CD14-positive monocyte (primary cell): ENCODE measurements at regions of chr16 and their contacts with region 1.

Region 1: GRCh38 chr16:31032736-31033708 is at the start of gene STX4:
- DNase-seq: peak; percentile 100
- H3K4me3 ChIP-seq: peak within 1 kb of the TSS; percentile 52 to 96 (median 70)
- H3K4me3 Mint-ChIP-seq: peak within 1 kb of the TSS; percentile 94 to 95
- H3K27ac ChIP-seq: peak within 1 kb of the TSS; percentile 97 to 100
- H3K27ac Mint-ChIP-seq: peak within 1 kb of the TSS; percentile 97 to 99 (median 99)
- H3K4me1 ChIP-seq: peaks cover 38 to 45% of the 10 kb centered on the region in 2 donors
- H3K4me1 Mint-ChIP-seq: peaks cover 34% of the 10 kb centered on the region
- H3K27me3 ChIP-seq: no peaks in the 10 kb centered on the region
- H3K27me3 Mint-ChIP-seq: peaks cover 0 to 3% (median 2%) of the 10 kb centered on the region in 3 donors
- CTCF ChIP-seq: no peak
- polyA plus RNA-seq, gene STX4: 18.6 to 186 (median 21.8) TPM

Region 2: GRCh38 chr16:30805370-30806169 is 227.5 kb before region 1 on chr16:
- intact Hi-C with region 1: no loop called
- DNase-seq: peak; percentile 50 to 62 (median 56)
- H3K4me3 ChIP-seq: peak overlapping the region; percentile 59 to 97 (median 82)
- H3K4me3 Mint-ChIP-seq: peak overlapping the region; percentile 91
- H3K27ac ChIP-seq: peak overlapping the region; percentile 59 to 82
- H3K27ac Mint-ChIP-seq: peak overlapping the region; percentile 72 to 89 (median 79)
- H3K4me1 ChIP-seq: peaks cover 45 to 51% of the 10 kb centered on the region in 2 donors
- H3K4me1 Mint-ChIP-seq: peaks cover 41% of the 10 kb centered on the region
- H3K27me3 ChIP-seq: no peaks in the 10 kb centered on the region
- H3K27me3 Mint-ChIP-seq: peaks cover 0 to 4% (median 0%) of the 10 kb centered on the region in 3 donors
- CTCF ChIP-seq: no peak

Region 3: GRCh38 chr16:30977502-30977901 is 55.5 kb before region 1 on chr16:
- intact Hi-C with region 1: no loop called
- DNase-seq: no peak
- H3K4me3 ChIP-seq: no peak overlapping the region
- H3K4me3 Mint-ChIP-seq: no peak overlapping the region
- H3K27ac ChIP-seq: no peak overlapping the region
- H3K27ac Mint-ChIP-seq: peak overlapping the region in 3 of 7 donors; percentile 22 to 43 (median 41)
- H3K4me1 ChIP-seq: no peaks in the 10 kb centered on the region
- H3K4me1 Mint-ChIP-seq: no peaks in the 10 kb centered on the region
- H3K27me3 ChIP-seq: no peaks in the 10 kb centered on the region
- H3K27me3 Mint-ChIP-seq: no peaks in the 10 kb centered on the region
- CTCF ChIP-seq: peak; percentile 34

Region 4: GRCh38 chr16:30997000-30997886 is 35.8 kb before region 1 on chr16:
- intact Hi-C with region 1: loop called (anchors 5 kb)
- DNase-seq: peak; percentile 79 to 82 (median 80)
- H3K4me3 ChIP-seq: peak overlapping the region; percentile 53 to 83 (median 58)
- H3K4me3 Mint-ChIP-seq: peak overlapping the region; percentile 83 to 93
- H3K27ac ChIP-seq: peak overlapping the region; percentile 67 to 87
- H3K27ac Mint-ChIP-seq: peak overlapping the region; percentile 82 to 94 (median 89)
- H3K4me1 ChIP-seq: peaks cover 24 to 32% of the 10 kb centered on the region in 2 donors
- H3K4me1 Mint-ChIP-seq: peaks cover 31% of the 10 kb centered on the region
- H3K27me3 ChIP-seq: peaks cover 0 to 3% of the 10 kb centered on the region in 2 donors
- H3K27me3 Mint-ChIP-seq: peaks cover 1 to 17% (median 4%) of the 10 kb centered on the region in 3 donors
- CTCF ChIP-seq: no peak

Region 5: GRCh38 chr16:31052124-31052523 is 19.1 kb after region 1 on chr16:
- intact Hi-C with region 1: loop called in 1 of 2 experiments (anchors 2 kb)
- DNase-seq: peak; percentile 72 to 88 (median 77)
- H3K4me3 ChIP-seq: no peak overlapping the region
- H3K4me3 Mint-ChIP-seq: no peak overlapping the region
- H3K27ac ChIP-seq: peak overlapping the region in 1 of 2 donors; percentile 17
- H3K27ac Mint-ChIP-seq: peak overlapping the region in 5 of 7 donors; percentile 62 to 85 (median 71)
- H3K4me1 ChIP-seq: peaks cover 12 to 17% of the 10 kb centered on the region in 2 donors
- H3K4me1 Mint-ChIP-seq: peaks cover 23% of the 10 kb centered on the region
- H3K27me3 ChIP-seq: no peaks in the 10 kb centered on the region
- H3K27me3 Mint-ChIP-seq: peaks cover 1 to 4% (median 2%) of the 10 kb centered on the region in 3 donors
- CTCF ChIP-seq: no peak

Region 6: GRCh38 chr16:31073968-31074813 is 41.2 kb after region 1 on chr16 and contains the starts of genes ZNF646 and ZNF668:
- intact Hi-C with region 1: loop called (anchors 1 to 2 kb)
- DNase-seq: peak; percentile 99 to 100 (median 100)
- H3K4me3 ChIP-seq: peak within 1 kb of the TSS; percentile 92 to 98 (median 97)
- H3K4me3 Mint-ChIP-seq: peak within 1 kb of the TSS; percentile 90 to 97
- H3K27ac ChIP-seq: peak within 1 kb of the TSS; percentile 97 to 100
- H3K27ac Mint-ChIP-seq: peak within 1 kb of the TSS; percentile 97 to 99 (median 98)
- H3K4me1 ChIP-seq: peaks cover 33 to 38% of the 10 kb centered on the region in 2 donors
- H3K4me1 Mint-ChIP-seq: peaks cover 38% of the 10 kb centered on the region
- H3K27me3 ChIP-seq: no peaks in the 10 kb centered on the region
- H3K27me3 Mint-ChIP-seq: peaks cover 0 to 2% (median 1%) of the 10 kb centered on the region in 3 donors
- CTCF ChIP-seq: no peak
- polyA plus RNA-seq, gene ZNF646: 0.46 to 6.5 (median 3.0) TPM
- polyA plus RNA-seq, gene ZNF668: 3.8 to 4.8 (median 4.5) TPM

Region 7: GRCh38 chr16:31094424-31095120 is 61.5 kb after region 1 on chr16 and contains the start of gene VKORC1:
- intact Hi-C with region 1: loop called in 1 of 2 experiments (anchors 5 kb)
- DNase-seq: peak; percentile 92 to 94 (median 93)
- H3K4me3 ChIP-seq: peak within 1 kb of the TSS; percentile 49 to 92 (median 92)
- H3K4me3 Mint-ChIP-seq: peak within 1 kb of the TSS; percentile 89 to 98
- H3K27ac ChIP-seq: peak within 1 kb of the TSS; percentile 52 to 74
- H3K27ac Mint-ChIP-seq: peak within 1 kb of the TSS; percentile 66 to 92 (median 86)
- H3K4me1 ChIP-seq: peaks cover 25 to 29% of the 10 kb centered on the region in 2 donors
- H3K4me1 Mint-ChIP-seq: peaks cover 21% of the 10 kb centered on the region
- H3K27me3 ChIP-seq: no peaks in the 10 kb centered on the region
- H3K27me3 Mint-ChIP-seq: peaks cover 0 to 4% (median 1%) of the 10 kb centered on the region in 3 donors
- CTCF ChIP-seq: no peak
- polyA plus RNA-seq, gene VKORC1: 59.2 to 113 (median 91.2) TPM

Region 8: GRCh38 chr16:31868691-31869167 is 835.7 kb after region 1 on chr16:
- intact Hi-C with region 1: loop called in 1 of 2 experiments (anchors 5 kb)
- DNase-seq: peak; percentile 78 to 82 (median 82)
- H3K4me3 ChIP-seq: peak overlapping the region; percentile 10 to 74 (median 48)
- H3K4me3 Mint-ChIP-seq: peak overlapping the region; percentile 64 to 75
- H3K27ac ChIP-seq: peak overlapping the region; percentile 99 to 100
- H3K27ac Mint-ChIP-seq: peak overlapping the region; percentile 97 to 100 (median 99)
- H3K4me1 ChIP-seq: peaks cover 29 to 49% of the 10 kb centered on the region in 2 donors
- H3K4me1 Mint-ChIP-seq: peaks cover 38% of the 10 kb centered on the region
- H3K27me3 ChIP-seq: no peaks in the 10 kb centered on the region
- H3K27me3 Mint-ChIP-seq: peaks cover 0 to 3% (median 2%) of the 10 kb centered on the region in 3 donors
- CTCF ChIP-seq: peak; percentile 91